SK-N-SH (cell line): ENCODE measurements at regions of chr12 and their contacts with region 1.

Region 1: DNA sequence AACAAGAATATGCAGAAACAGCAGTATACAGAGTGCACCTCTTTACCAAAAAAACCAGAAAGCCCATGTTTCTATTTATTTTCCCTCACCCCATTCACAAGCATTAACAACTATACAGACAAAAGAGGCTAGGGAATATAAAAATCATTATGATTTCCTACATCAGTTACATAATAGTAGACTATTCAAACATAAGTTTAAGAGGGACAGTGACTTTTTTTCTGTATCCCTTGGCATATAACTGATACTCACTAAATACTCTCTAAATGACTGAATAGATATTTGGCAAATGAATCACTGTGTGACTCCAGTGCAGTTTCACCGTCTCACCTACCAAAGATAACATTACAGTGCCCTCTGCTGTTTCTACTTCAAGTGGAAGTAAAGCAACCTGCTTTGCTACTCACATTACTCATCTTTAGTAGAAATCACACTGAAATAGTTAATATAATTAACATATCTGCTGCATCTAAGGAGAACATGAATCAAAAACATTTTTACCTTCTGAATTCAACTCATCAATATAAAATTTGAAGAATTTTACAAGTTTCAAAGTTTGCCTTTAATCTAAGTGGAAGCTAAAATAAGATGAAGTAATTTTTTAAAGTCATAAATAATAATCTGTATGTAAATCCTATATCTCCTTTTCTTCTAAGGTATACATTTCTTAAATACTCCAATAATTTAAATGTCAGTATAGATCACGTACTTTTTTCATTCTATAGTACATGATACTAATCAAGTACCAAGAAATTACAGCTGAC is 103.8 kb downstream of the OSBPL8 start:
- DNase-seq: peak; percentile 42
- H3K4me3 ChIP-seq: no peak overlapping the region; a peak in 1 of 4 replicates
- H3K27ac ChIP-seq: peak overlapping the region; percentile 56 to 67; a peak in 3 of 4 replicates
- H3K4me1 ChIP-seq: peaks cover 0 to 7% of the 10 kb centered on the region in 2 experiments; a peak in 2 of 4 replicates
- H3K27me3 ChIP-seq: no peaks in the 10 kb centered on the region
- CTCF ChIP-seq: peak; percentile 82
- EP300 ChIP-seq: no peak; a peak in 1 of 4 replicates
- RAD21 ChIP-seq: peak; percentile 95

Region 2: DNA sequence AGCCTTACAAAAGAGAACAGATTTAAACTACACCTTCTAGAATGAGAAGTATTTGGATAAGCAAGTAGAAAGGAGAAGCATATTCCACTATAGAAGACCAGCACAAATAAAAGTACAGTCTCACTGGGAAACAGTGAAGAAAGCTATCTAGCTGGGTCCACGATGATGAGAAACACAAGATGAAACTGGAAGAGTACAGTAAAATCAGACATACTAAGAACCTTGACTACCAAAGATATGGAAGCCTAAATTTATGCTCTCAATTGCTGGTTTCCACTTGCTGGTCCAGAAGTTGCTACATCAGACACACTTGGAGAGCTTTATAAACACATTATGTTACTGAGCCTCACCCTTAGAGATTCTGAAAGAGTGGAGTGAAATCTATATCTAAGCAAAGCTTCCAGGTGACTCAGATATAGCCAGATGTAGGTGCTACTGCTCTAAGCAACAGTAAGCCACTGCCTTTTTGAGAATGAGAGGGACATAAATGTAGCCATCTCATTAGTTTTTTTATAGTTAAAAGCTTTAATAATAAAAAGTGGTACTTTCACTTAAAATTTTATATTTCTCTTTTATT is 11.3 kb before region 1 on chr12:
- CTCF ChIA-PET with region 1: interaction called, 14 read pairs
- POLR2A ChIA-PET with region 1: no interaction called
- DNase-seq: no peak
- H3K4me3 ChIP-seq: no peak overlapping the region
- H3K27ac ChIP-seq: peak overlapping the region in 1 of 2 experiments; percentile 35; a peak in 3 of 4 replicates
- H3K4me1 ChIP-seq: peaks cover 0 to 24% of the 10 kb centered on the region in 2 experiments; a peak in 3 of 4 replicates
- H3K27me3 ChIP-seq: no peaks in the 10 kb centered on the region
- CTCF ChIP-seq: no peak
- EP300 ChIP-seq: no peak
- RAD21 ChIP-seq: no peak

Region 3: DNA sequence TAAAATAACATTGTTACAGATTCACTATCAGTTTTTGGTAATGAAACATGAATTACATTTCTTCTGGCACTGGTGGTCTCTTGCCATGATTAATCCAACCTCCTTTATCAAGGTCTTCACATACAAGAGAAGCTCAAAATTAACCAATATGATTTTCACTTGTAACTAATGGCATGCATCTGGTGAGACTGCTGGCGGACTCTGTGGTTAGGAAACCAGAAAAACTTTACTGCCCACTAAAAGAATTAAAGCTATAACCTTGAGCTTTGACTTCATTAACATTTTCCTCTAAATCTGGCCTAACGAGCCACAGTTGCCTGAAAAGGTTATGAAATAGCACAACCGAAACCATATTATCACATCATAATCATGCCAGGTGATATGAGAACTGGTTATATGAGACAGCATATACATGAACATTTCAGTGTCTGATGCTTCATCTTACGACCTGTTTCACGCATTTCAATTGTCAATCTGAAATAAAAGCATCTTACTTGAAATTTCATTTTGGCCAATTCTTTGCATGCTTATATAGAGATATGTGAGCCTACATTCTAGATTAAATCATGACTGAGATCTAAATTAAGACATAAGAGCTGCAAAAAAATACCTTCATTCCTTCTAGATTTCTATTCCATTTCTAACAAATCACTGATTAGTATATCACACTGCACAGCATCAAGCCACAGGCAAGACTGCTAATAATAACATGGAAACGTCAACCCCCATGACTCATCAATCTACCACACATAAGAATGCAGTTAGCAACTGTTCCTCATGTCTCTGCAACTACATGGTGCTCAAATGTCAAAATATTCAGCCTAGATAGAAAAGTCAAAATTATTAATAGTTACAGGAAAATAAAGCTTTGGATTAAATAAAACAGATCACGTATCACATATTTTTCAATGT is 14.5 kb after region 1 on chr12:
- CTCF ChIA-PET with region 1: interaction called, 19 read pairs
- POLR2A ChIA-PET with region 1: no interaction called
- DNase-seq: peak; percentile 3
- H3K4me3 ChIP-seq: 0 out of 4 replicates have a peak overlapping the region, but pooled peaks of 1 of the 2 experiments have one; percentile 1
- H3K27ac ChIP-seq: peak overlapping the region; percentile 60 to 69; a peak in 3 of 4 replicates
- H3K4me1 ChIP-seq: peaks cover 0 to 21% of the 10 kb centered on the region in 2 experiments; a peak in 3 of 4 replicates
- H3K27me3 ChIP-seq: no peaks in the 10 kb centered on the region
- CTCF ChIP-seq: no peak
- EP300 ChIP-seq: no peak
- RAD21 ChIP-seq: no peak

Region 4: GRCh38 chr12:76569685-76570604 is 114.2 kb after region 1 on chr12:
- CTCF ChIA-PET with region 1: no interaction called
- POLR2A ChIA-PET with region 1: no interaction called
- DNase-seq: no peak
- H3K4me3 ChIP-seq: no peak overlapping the region
- H3K27ac ChIP-seq: no peak overlapping the region
- H3K4me1 ChIP-seq: no peaks in the 10 kb centered on the region
- H3K27me3 ChIP-seq: no peaks in the 10 kb centered on the region
- CTCF ChIP-seq: no peak
- EP300 ChIP-seq: no peak
- RAD21 ChIP-seq: no peak